CD4-positive, alpha-beta memory T cell (primary cell): ENCODE measurements at regions of chr20 and their contacts with region 1.

Region 1: DNA sequence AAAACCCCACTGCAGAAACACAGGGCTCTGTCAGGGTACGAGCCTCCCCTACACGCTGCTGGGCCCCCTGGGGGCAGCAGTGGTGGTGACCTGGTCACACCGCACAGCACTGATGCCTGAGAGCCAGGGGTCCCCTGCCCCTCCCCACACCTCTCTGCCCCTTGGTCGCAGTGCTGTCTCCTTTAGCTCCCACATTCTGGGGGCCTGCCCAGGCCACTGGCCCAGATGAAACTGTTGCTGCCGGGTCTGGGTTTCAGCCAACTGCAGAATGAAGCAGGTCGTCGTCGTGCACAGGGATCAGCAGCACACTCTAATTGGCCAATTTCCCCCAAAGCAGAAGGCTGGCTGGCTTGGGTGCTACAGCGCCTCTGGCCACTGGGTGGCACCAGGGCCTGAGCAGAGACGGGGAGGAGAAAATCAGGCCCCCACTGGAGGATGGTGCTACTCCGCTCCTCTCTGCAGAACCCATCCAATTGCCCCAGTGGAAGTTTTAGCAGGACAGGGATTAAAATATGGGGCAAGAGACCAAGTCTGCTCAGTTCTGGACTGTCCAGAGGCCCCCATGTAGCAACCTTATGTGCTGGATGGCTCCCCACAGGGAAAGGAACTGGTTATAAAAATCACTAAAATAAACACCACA is 26.1 kb downstream of the DIDO1 start:
- DNase-seq: peak; percentile 76 to 80 (median 77)
- H3K4me3 ChIP-seq: no peak overlapping the region
- H3K4me3 Mint-ChIP-seq: peak overlapping the region in 6 of 8 donors; percentile 55 to 85 (median 66)
- H3K27ac ChIP-seq: peak overlapping the region; percentile 22
- H3K27ac Mint-ChIP-seq: peak overlapping the region; percentile 39 to 90 (median 86)
- H3K4me1 ChIP-seq: peaks cover 28% of the 10 kb centered on the region
- H3K4me1 Mint-ChIP-seq: peaks cover 21 to 44% (median 33%) of the 10 kb centered on the region in 4 donors
- H3K27me3 ChIP-seq: no peaks in the 10 kb centered on the region
- H3K27me3 Mint-ChIP-seq: no peaks in the 10 kb centered on the region

Region 2: GRCh38 chr20:62914970-62915457 is 14.8 kb after region 1 on chr20:
- CTCF ChIA-PET with region 1: interaction called, 90 read pairs
- POLR2A ChIA-PET with region 1: interaction called, 32 read pairs
- intact Hi-C with region 1: no loop called
- DNase-seq: peak in 2 of 5 donors; percentile 29 to 47
- H3K4me3 ChIP-seq: no peak overlapping the region
- H3K4me3 Mint-ChIP-seq: peak overlapping the region in 7 of 8 donors; percentile 37 to 76 (median 61)
- H3K27ac ChIP-seq: no peak overlapping the region
- H3K27ac Mint-ChIP-seq: peak overlapping the region; percentile 59 to 93 (median 81)
- H3K4me1 ChIP-seq: peaks cover 68% of the 10 kb centered on the region
- H3K4me1 Mint-ChIP-seq: peaks cover 49 to 87% (median 63%) of the 10 kb centered on the region in 4 donors
- H3K27me3 ChIP-seq: no peaks in the 10 kb centered on the region
- H3K27me3 Mint-ChIP-seq: no peaks in the 10 kb centered on the region

Region 3: DNA sequence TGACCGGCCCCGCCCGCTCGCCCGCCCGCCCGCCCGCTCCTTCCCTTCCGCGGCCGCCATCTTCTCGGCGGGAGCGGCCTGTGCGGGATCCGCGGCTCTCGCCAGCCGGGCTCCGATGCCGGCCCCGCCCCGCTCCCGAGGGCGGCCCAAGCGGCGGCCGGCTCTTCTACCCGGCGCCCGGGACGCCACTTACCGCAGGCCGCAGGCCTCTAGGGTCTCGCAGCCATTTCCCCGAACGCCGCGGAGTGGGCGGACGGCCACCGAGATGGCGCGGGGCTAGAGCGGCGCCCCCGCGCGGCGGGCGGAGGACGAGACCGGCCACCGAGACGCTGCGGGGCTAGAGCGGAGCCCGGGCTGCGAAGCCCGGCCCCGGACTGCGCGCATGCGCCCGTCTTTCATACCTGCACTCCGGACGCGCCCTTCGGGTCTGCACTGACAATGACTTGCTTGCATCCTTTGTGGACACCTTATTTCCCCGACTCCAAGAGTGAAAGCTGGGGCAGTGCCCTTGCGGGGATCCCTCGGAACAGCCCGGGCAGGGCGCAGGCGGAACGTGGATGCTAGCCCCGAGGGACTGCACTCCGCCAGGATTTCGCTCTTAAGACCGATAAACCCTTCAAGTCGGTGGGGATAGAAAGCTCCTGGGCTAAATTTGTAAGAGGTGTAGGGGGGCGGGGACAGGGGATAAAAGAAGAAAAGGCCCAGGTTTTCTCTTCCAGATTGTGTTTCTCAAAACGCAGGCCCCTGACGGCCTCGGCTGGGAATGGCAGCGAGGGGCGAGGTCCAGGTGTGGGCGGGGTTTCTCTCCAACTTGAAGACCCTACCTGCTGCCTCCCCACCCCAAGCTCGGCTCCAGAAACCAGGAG is 26.3 kb after region 1 on chr20 and contains the start of gene DIDO1:
- CTCF ChIA-PET with region 1: interaction called, 90 read pairs
- POLR2A ChIA-PET with region 1: interaction called, 49 read pairs
- intact Hi-C with region 1: loop called (anchors 1 kb)
- DNase-seq: peak; percentile 88 to 91 (median 90)
- H3K4me3 ChIP-seq: peak within 1 kb of the TSS; percentile 87 to 88
- H3K4me3 Mint-ChIP-seq: peak within 1 kb of the TSS; percentile 91 to 97 (median 96)
- H3K27ac ChIP-seq: peak within 1 kb of the TSS; percentile 91
- H3K27ac Mint-ChIP-seq: peak within 1 kb of the TSS; percentile 89 to 97 (median 94)
- H3K4me1 ChIP-seq: peaks cover 78% of the 10 kb centered on the region
- H3K4me1 Mint-ChIP-seq: peaks cover 37 to 89% (median 63%) of the 10 kb centered on the region in 4 donors
- H3K27me3 ChIP-seq: no peaks in the 10 kb centered on the region
- H3K27me3 Mint-ChIP-seq: no peaks in the 10 kb centered on the region
- total RNA-seq, gene DIDO1: 127 to 129 TPM

Region 4: GRCh38 chr20:62953839-62954703 is 53.9 kb after region 1 on chr20:
- CTCF ChIA-PET with region 1: interaction called, 8 read pairs
- POLR2A ChIA-PET with region 1: interaction called, 14 read pairs
- intact Hi-C with region 1: no loop called
- DNase-seq: peak; percentile 74 to 85 (median 77)
- H3K4me3 ChIP-seq: peak overlapping the region; percentile 17 to 27
- H3K4me3 Mint-ChIP-seq: peak overlapping the region; percentile 72 to 93 (median 83)
- H3K27ac ChIP-seq: peak overlapping the region; percentile 57
- H3K27ac Mint-ChIP-seq: peak overlapping the region; percentile 92 to 95 (median 93)
- H3K4me1 ChIP-seq: peaks cover 28% of the 10 kb centered on the region
- H3K4me1 Mint-ChIP-seq: peaks cover 11 to 31% (median 24%) of the 10 kb centered on the region in 4 donors
- H3K27me3 ChIP-seq: no peaks in the 10 kb centered on the region
- H3K27me3 Mint-ChIP-seq: no peaks in the 10 kb centered on the region

Region 5: DNA sequence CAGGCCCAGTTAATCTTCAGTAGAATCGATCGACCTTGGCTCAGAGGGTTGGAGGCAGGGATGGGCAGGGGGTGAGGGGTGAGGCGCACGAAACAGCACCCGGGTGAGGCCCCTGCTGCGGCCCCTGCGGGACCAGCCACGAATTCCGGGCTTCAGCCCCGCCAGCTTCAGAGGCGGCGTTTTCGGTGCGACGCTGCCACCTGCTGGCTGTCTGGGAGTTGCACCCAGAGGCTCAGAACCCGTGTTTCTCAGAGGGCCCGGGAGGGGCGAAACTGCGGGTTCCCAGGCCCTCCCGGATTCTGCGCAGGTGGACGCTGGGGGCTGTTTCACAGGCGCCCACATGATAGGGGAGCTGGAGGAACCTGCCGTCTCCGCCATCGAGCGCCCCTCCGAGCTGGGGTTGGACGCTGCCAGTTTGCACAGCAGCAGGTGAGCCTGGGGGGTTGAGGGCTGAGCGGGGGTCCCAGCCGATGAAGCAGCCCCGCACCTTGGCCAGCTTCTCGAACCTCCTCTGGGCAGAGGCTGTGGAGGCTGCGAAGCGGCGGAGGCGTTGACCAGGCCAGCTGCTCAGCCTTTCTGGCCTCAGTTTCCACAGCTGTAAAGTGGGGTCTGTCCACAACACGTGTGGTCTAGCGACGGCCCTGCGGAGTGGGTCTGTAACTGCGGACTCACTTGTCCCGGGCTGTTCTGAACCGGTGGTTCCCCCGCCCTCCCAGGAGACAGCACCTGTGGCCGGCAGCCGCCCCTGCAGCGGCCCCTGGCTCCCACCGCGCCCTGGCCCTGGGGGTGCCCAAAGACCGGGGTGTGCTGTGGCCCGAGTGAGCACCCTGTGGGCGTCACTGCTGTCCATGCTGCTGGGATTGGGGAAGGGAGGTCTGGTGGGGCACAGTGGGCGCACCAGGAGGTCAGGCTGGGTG is 109.1 kb after region 1 on chr20:
- CTCF ChIA-PET with region 1: interaction called, 35 read pairs
- POLR2A ChIA-PET with region 1: interaction called, 6 read pairs
- intact Hi-C with region 1: loop called (anchors 1 kb)
- DNase-seq: peak; percentile 74 to 82 (median 74)
- H3K4me3 ChIP-seq: peak overlapping the region in 1 of 2 donors; percentile 65
- H3K4me3 Mint-ChIP-seq: peak overlapping the region in 6 of 8 donors; percentile 86 to 92 (median 90)
- H3K27ac ChIP-seq: no peak overlapping the region
- H3K27ac Mint-ChIP-seq: peak overlapping the region in 5 of 7 donors; percentile 36 to 95 (median 80)
- H3K4me1 ChIP-seq: peaks cover 44% of the 10 kb centered on the region
- H3K4me1 Mint-ChIP-seq: peaks cover 7 to 43% (median 26%) of the 10 kb centered on the region in 4 donors
- H3K27me3 ChIP-seq: peaks cover 31% of the 10 kb centered on the region
- H3K27me3 Mint-ChIP-seq: peaks cover 40% of the 10 kb centered on the region in 2 donors